ENCODE measurements at regions of chr1 and their contacts with region 1.

Region 1: GRCh38 chr1:26161415-26162219 is 2.7 kb downstream of the FAM110D start:
- DNase-seq: peak; percentile 87

Region 2: GRCh38 chr1:25204797-25205480 is 956.7 kb before region 1 on chr1:
- intact Hi-C with region 1: no loop called
- DNase-seq: no peak

Region 3: DNA sequence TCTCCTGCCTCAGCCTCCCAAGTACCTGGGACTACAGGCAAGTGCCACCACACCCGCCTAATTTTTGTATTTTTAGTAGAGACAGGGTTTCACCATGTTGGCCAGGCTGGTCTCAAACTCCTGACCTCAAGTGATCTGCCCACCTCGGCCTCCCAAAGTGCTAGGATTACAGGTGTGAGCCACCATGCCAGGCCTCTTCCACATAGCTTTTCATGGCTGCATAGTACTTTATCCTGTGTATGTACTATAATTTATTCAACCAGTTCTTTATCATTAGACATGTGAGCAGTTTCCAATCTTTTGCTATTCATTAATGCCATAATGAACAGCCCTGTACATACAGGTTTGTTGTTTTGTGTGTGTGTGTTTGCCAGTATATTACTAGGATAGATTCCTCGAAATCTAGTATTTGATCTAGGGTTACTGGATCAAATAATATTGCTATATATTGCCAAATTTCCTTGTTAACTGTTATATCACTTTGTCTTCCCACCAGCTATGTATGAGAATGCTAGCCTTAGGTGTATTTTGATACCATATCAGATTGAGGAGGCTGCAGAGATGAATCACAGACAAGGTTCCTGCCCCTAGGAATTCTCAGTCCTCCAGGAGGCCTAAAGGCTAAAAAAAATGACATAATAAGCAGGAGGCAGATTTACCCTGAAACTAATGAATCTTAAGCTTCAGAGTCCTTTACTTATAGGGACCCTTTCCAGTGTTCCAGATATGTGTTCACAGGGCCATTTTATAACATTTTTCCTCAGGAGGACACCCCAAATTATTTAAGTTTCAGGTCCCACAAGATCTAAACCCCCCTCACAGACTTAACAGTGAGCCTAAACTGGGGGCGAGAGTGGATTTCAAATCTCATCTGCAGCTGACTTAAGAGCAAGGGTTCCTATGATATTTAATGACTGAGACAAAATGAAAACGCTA is 52.1 kb before region 1 on chr1:
- intact Hi-C with region 1: loop called in 1 of 2 experiments (anchors 5 kb)
- DNase-seq: no peak